Activated naive CD4-positive, alpha-beta T cell treated with anti-CD3 and anti-CD28 coated beads for 36 hours (primary cell): ENCODE measurements at regions of chr5 and their contacts with region 1.

Region 1: DNA sequence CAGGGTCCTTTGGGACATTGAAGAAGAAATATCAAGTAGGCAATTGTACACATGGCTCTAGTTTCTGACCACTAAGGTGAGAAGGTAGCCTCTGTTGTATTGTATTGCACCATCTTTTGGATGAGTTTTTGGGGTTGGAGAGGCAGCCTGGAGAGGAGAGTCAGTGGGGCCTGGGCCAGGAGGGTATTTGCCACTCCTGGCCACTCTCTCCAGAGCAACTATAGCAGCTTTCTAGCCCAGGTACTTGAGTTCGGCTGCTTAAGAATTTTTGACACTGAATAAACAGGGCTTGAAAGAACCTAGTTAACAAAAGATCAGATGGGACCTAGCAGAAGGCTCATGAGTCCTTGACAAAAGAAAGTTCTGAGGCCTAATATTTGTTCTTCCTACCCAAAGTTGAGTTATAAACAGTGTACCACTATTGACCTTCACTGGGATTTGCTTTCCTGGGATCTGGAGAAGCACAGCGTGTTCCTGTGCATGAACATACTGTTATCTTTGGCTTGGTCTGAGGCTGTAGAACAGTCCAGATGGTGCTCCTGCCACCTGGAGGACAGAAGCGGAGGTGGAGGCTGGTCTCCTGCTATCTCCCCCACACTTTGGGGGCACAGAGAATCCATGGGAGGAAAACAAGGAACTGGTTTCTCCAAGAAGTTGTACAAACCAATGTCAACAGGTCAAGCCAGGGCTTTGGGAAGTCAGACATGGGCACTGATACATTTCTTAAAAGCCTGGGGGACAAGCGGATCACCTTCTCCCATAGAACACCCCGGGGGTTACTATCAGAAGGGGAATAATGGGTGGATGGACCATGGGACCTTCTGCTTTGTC is 110.4 kb upstream of the LIFR start:
- DNase-seq: peak; percentile 10
- H3K4me3 Mint-ChIP-seq: no peak overlapping the region
- H3K27ac Mint-ChIP-seq: no peak overlapping the region
- H3K4me1 Mint-ChIP-seq: no peaks in the 10 kb centered on the region
- H3K27me3 Mint-ChIP-seq: peaks cover 4% of the 10 kb centered on the region

Region 2: DNA sequence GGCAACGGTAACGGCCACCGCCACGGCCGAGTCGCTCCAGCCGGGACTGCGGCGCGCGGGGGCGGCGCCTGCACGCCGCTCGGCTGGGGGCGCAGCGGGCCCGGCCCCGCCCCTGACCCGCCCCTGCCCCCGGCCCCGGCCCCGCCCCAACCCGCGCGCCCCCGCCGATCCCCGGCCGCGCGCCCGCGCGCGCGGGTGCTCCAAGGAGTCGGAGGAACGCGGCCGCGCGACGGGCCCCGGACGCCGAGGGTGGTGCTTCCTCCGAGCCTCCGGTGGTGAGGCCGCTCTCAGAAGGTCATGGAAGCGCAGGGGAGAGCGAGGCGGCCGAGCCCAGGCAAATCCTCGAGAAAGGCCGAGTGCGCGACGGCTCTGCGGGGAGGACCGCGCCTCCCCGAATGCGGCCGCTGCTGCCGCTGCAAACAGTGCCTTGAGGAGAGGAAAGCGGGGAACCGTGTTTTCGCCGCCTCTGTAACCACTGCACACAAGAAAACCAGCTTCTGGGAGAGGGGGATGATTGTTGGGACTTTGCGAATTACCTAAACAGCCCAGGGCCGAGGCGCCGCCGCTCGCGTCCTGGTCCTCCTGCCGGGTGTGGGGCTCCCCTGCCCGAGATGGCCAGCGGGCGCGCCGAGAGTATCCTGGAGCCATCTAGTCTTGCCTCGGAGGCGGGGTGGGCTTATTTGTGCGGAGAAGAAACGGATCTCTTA is 110.1 kb before region 1 on chr5 and contains the start of gene LIFR:
- CTCF ChIA-PET with region 1: no interaction called
- intact Hi-C with region 1: loop called (anchors 10 kb)
- DNase-seq: peak; percentile 66
- H3K4me3 Mint-ChIP-seq: peak within 1 kb of the TSS; percentile 79
- H3K27ac Mint-ChIP-seq: no peak within 1 kb of the TSS
- H3K4me1 Mint-ChIP-seq: peaks cover 7% of the 10 kb centered on the region
- H3K27me3 Mint-ChIP-seq: peaks cover 52% of the 10 kb centered on the region
- total RNA-seq, gene LIFR: 0.20 TPM in 1 of 2 experiments, not detected in the other